Panc1 (cell line): ENCODE measurements at regions of chr11 and their contacts with region 1.

Region 1: DNA sequence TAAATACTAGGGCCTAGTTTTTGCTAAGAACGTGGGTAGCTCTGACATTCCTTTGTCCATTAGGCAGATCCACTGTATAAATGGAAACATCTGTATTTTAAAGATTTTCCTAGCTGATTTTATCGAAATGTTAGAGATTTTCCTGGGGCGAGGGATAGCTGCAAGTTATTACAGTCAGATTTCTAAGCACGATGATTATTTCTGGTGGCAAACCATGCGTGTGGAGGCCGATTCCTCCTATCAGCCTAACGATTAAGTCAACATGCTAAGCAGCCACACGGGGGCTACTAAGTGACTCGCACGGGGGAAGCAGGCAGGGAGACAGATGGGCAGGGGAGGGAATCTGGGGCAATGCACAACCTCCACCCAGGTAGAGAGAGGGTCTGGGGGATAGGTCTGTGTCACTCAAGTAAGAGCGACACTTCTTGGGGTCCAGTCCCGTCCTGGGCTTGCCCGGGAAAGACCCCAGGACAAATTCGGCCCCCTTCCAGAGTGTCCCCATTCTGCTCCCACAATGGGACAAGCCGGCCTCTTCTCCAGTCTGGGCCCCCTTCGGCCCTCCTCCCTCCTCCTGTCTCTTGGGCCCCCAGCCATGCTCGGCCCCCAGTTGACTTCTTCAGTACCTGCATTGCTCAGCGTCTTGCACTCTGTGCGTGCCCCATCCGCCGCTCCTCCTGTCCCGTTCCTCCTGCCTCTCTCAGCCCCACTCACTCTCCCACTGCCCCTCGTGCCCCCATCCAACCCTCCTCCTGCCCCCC is 571 bp downstream of the C11orf24 start:
- DNase-seq: peak; percentile 18
- ATAC-seq: peak; percentile 66
- H3K4me3 ChIP-seq: peak overlapping the region; percentile 77 to 85
- H3K27ac ChIP-seq: peak overlapping the region; percentile 86
- H3K4me1 ChIP-seq: peaks cover 15% of the 10 kb centered on the region
- H3K27me3 ChIP-seq: no peaks in the 10 kb centered on the region
- CTCF ChIP-seq: no peak; the same call in 1 of the 2 replicates

Region 2: GRCh38 chr11:68242616-68243015 is 28.6 kb before region 1 on chr11:
- CTCF ChIA-PET with region 1: interaction called, 7 read pairs
- POLR2A ChIA-PET with region 1: interaction called, 20 read pairs
- in situ Hi-C with region 1: no loop called
- intact Hi-C with region 1: no loop called
- DNase-seq: no peak
- ATAC-seq: no peak
- H3K4me3 ChIP-seq: no peak overlapping the region
- H3K27ac ChIP-seq: no peak overlapping the region
- H3K4me1 ChIP-seq: no peaks in the 10 kb centered on the region
- H3K27me3 ChIP-seq: no peaks in the 10 kb centered on the region
- CTCF ChIP-seq: no peak